CD8-positive, alpha-beta T cell (primary cell): ENCODE measurements at regions of chr17 and their contacts with region 1.

Region 1: DNA sequence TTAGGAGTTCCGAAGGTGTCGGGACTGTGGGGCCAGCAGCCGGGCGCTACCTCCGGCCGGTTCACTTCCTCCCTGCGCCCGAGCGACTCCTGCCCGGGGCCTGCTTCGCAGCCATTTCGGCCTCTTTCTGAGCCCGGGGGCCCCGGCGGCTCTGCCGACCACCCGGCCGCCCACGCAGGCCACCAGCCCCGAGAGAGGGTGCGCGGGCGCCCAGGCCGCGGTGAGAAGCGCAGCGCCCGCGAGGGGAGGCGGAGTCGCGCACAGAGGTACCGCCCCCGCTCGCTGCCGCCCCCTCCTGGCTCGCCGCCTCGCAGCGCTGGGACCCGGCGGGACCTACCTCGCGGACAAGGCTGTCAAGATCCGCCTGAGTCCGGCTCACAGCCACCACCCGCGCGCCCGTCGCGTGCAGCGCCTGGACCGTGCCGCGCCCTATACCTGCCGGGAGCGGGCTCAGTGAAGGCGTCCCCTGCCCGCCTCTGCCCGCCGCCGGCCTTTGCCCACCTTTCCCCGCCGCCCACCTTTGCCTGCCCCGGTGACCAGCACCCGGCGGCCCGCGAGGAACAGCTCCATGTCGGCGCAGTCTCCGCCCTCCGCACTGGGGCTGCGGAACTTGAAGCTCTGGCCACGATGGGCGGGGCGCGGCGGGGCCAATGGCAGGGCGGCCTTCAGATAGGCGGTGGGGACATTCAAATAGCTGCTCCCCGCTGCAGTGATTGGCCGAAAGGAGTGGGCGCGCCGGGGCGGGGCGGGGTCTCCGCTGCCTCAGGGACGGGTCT is at the start of gene DCXR:
- DNase-seq: peak; percentile 82 to 98 (median 95)
- ATAC-seq: peak; percentile 93
- H3K4me3 ChIP-seq: peak within 1 kb of the TSS; percentile 68 to 73
- H3K4me3 Mint-ChIP-seq: peak within 1 kb of the TSS; percentile 87
- H3K27ac ChIP-seq: peak within 1 kb of the TSS; percentile 58 to 80
- H3K27ac Mint-ChIP-seq: peak within 1 kb of the TSS; percentile 87
- H3K4me1 ChIP-seq: peaks cover 14% of the 10 kb centered on the region
- H3K4me1 Mint-ChIP-seq: peaks cover 26% of the 10 kb centered on the region
- H3K27me3 ChIP-seq: no peaks in the 10 kb centered on the region
- H3K27me3 Mint-ChIP-seq: no peaks in the 10 kb centered on the region
- CTCF ChIP-seq: peak; percentile 82
- total RNA-seq, gene DCXR: 71.7 to 77.7 TPM

Region 2: DNA sequence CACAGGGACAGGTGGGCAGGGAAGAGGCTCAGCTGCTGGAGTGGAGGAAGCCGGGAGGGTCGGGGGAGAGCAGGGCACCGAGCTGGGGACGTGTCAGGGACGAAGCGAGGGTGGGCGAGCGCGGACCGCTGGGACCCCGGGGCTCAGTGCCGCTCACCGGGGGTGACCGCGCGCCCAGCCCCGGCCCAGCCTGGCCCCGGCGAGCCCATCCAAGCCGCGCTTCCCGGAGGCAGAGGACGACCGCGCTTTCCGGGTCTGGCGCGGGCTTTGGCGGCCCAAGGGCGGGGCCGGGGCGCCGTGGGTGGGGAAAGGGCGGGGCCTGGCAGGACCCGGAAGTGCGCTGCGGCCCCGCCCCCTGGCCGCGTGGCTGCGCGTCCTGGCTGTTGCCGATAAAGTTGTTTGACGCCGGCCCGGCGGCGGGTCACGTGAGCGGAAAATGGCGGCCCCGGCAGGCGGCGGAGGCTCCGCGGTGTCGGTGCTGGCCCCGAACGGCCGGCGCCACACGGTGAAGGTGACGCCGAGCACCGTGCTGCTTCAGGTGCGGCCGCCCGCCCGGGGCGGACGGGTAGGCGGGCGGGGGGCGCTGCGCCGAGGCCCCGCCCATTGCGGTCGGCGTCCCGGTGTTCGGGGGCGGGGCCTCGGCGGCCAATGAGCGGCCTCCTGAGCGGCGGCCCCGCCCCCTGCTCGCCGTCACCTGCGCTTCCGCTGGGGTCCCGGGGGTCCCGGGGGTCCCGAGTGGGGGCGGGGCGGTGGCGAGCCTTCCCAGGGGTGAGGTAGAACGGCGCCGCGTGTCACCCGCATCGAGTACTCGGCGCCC is 59.9 kb before region 1 on chr17 and contains the start of gene ASPSCR1:
- CTCF ChIA-PET with region 1: no interaction called
- POLR2A ChIA-PET with region 1: no interaction called
- intact Hi-C with region 1: loop called in 1 of 2 experiments (anchors 1 kb)
- DNase-seq: peak; percentile 73 to 95 (median 90)
- ATAC-seq: peak; percentile 91
- H3K4me3 ChIP-seq: peak within 1 kb of the TSS; percentile 77 to 97
- H3K4me3 Mint-ChIP-seq: peak within 1 kb of the TSS; percentile 97
- H3K27ac ChIP-seq: peak within 1 kb of the TSS; percentile 72 to 83
- H3K27ac Mint-ChIP-seq: peak within 1 kb of the TSS; percentile 95
- H3K4me1 ChIP-seq: peaks cover 29% of the 10 kb centered on the region
- H3K4me1 Mint-ChIP-seq: peaks cover 33% of the 10 kb centered on the region
- H3K27me3 ChIP-seq: no peaks in the 10 kb centered on the region
- H3K27me3 Mint-ChIP-seq: no peaks in the 10 kb centered on the region
- CTCF ChIP-seq: no peak
- total RNA-seq, gene ASPSCR1: 18.6 to 19.5 TPM

Region 3: DNA sequence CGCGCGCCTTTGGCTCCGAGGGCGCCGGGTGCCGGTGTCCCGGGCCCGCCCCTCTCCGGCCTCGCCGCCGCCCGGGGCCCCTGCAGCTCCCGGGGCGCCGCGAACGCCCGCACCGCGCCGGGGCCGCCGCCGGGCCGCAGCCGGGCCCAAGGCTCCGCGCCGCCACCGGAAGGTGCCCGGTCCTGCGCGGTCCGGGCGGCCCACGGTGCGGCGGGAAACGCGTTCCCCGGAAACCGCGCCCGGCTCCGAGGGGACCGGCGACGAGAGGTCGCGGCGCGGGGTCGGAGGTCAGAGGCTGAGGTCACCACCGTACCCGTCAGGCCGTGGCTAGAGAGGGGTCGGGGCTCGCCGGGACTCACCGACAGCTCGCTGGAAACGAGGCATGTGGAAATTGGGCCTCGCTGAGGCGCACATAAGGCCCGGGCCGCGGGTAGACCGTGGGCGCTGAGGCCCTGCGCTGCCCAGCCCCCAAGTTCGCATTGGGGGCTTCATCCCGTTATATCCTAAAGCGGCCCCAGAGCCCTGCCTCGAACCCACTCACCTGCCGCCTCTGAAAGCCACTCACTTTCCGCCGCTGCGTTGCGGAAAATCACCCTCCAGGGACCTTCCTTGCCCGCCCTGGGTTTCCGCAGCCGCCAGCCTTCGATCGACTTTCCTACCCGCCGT is 28.5 kb after region 1 on chr17 and contains the start of gene DUS1L:
- CTCF ChIA-PET with region 1: interaction called, 4 read pairs
- POLR2A ChIA-PET with region 1: interaction called, 6 read pairs
- intact Hi-C with region 1: loop called in 1 of 2 experiments (anchors 1 kb)
- DNase-seq: peak; percentile 44 to 86 (median 68)
- ATAC-seq: peak; percentile 87
- H3K4me3 ChIP-seq: peak within 1 kb of the TSS; percentile 79 to 87
- H3K4me3 Mint-ChIP-seq: peak within 1 kb of the TSS; percentile 82
- H3K27ac ChIP-seq: peak within 1 kb of the TSS; percentile 70 to 91
- H3K27ac Mint-ChIP-seq: peak within 1 kb of the TSS; percentile 92
- H3K4me1 ChIP-seq: peaks cover 20% of the 10 kb centered on the region
- H3K4me1 Mint-ChIP-seq: peaks cover 14% of the 10 kb centered on the region
- H3K27me3 ChIP-seq: no peaks in the 10 kb centered on the region
- H3K27me3 Mint-ChIP-seq: no peaks in the 10 kb centered on the region
- CTCF ChIP-seq: no peak
- total RNA-seq, gene DUS1L: 159 to 174 TPM

Region 4: DNA sequence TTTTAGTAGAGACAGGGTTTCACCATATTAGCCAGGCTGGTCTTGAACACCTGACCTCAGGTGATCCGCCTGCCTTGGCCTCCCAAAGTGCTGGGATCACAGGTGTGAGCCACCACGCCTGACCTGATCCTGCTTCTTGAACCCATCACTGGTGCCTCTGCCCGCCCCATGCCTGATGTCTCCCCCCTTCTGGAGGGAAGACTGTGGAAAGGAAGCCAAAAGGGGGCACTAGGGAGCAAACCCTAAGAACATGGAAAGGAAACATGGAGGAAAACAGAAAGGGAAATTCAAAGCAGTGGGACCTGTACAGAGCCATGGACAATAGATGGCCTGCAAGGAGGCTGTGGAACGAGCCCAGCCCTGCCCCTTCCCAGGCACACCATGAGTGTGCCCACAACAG is 91.8 kb after region 1 on chr17:
- CTCF ChIA-PET with region 1: no interaction called
- POLR2A ChIA-PET with region 1: interaction called, 6 read pairs
- intact Hi-C with region 1: loop called (anchors 1 kb)
- DNase-seq: no peak
- ATAC-seq: no peak
- H3K4me3 ChIP-seq: no peak overlapping the region
- H3K4me3 Mint-ChIP-seq: no peak overlapping the region
- H3K27ac ChIP-seq: no peak overlapping the region
- H3K27ac Mint-ChIP-seq: peak overlapping the region; percentile 98
- H3K4me1 ChIP-seq: peaks cover 46% of the 10 kb centered on the region
- H3K4me1 Mint-ChIP-seq: peaks cover 47% of the 10 kb centered on the region
- H3K27me3 ChIP-seq: no peaks in the 10 kb centered on the region
- H3K27me3 Mint-ChIP-seq: no peaks in the 10 kb centered on the region
- CTCF ChIP-seq: no peak

Region 5: GRCh38 chr17:82292251-82293154 is 255.2 kb after region 1 on chr17:
- CTCF ChIA-PET with region 1: no interaction called
- POLR2A ChIA-PET with region 1: interaction called, 3 read pairs
- intact Hi-C with region 1: loop called in 1 of 2 experiments (anchors 10 kb)
- DNase-seq: peak; percentile 85 to 98 (median 90)
- ATAC-seq: peak; percentile 85
- H3K4me3 ChIP-seq: peak overlapping the region; percentile 65 to 78
- H3K4me3 Mint-ChIP-seq: peak overlapping the region; percentile 88
- H3K27ac ChIP-seq: peak overlapping the region; percentile 88 to 96
- H3K27ac Mint-ChIP-seq: peak overlapping the region; percentile 94
- H3K4me1 ChIP-seq: peaks cover 26% of the 10 kb centered on the region
- H3K4me1 Mint-ChIP-seq: peaks cover 40% of the 10 kb centered on the region
- H3K27me3 ChIP-seq: no peaks in the 10 kb centered on the region
- H3K27me3 Mint-ChIP-seq: no peaks in the 10 kb centered on the region
- CTCF ChIP-seq: no peak

Region 6: GRCh38 chr17:82332669-82333278 is 295.5 kb after region 1 on chr17:
- CTCF ChIA-PET with region 1: no interaction called
- POLR2A ChIA-PET with region 1: no interaction called
- intact Hi-C with region 1: no loop called
- DNase-seq: peak in 5 of 9 experiments; percentile 27 to 56 (median 35)
- ATAC-seq: peak; percentile 47
- H3K4me3 ChIP-seq: peak overlapping the region; percentile 45 to 59
- H3K4me3 Mint-ChIP-seq: peak overlapping the region; percentile 84
- H3K27ac ChIP-seq: no peak overlapping the region
- H3K27ac Mint-ChIP-seq: no peak overlapping the region
- H3K4me1 ChIP-seq: peaks cover 25% of the 10 kb centered on the region
- H3K4me1 Mint-ChIP-seq: peaks cover 22% of the 10 kb centered on the region
- H3K27me3 ChIP-seq: peaks cover 0 to 9% of the 10 kb centered on the region in 2 experiments
- H3K27me3 Mint-ChIP-seq: peaks cover 6% of the 10 kb centered on the region
- CTCF ChIP-seq: no peak